ENCODE measurements at regions of chr4 and their contacts with region 1.

Region 1: GRCh38 chr4:108492816-108493595 is 127.4 kb upstream of the RPL34 start:
- DNase-seq: peak; percentile 11
- ATAC-seq: peak; percentile 88
- H3K4me3 ChIP-seq: no peak overlapping the region
- H3K27ac ChIP-seq: no peak overlapping the region
- H3K4me1 ChIP-seq: no peaks in the 10 kb centered on the region
- H3K27me3 ChIP-seq: no peaks in the 10 kb centered on the region; the same call in 1 of the 2 replicates
- CTCF ChIP-seq: peak; percentile 51
- POLR2A ChIP-seq: no peak
- RAD21 ChIP-seq: peak; percentile 76

Region 2: DNA sequence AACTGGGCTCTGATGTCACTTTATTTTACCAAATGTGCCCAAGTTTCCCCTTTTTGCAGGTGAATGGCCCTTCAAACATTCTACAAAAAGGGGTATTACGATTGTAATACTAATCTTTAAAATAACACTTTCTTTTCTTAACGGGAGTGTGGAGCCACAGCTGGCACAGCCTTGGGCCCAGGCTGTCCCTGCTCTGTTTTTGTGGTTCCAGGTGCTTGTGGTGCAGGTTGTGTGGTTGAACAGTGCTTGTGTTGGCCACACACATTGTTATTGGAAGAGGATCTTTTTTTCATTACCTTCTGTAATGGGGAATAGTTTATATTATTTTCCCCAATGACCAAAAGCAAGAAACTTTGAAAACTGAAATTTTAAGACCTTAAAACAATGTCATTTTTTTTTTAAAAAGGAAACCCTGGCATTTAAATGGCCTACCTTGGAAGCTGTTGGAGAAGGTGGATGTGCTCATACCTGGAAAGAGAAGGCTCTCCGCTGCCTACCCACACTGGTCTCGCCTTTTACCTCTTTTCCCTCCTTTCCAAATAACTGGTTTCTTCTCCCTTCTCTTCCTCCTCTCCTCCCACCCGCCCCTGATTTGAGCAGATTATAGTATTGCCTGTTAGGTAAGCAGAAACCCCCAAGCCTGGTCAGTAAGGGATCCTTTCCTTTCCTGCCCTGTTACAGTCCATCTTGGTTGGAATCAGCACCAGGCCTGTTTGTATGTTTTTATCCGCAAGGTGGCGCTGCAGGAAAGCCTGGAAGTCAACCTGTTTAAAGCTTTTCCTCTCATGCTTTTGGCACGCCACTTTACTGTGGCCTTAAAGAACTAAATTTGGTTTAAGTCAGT is 474.7 kb before region 1 on chr4:
- CTCF ChIA-PET with region 1: interaction called, 7 read pairs
- POLR2A ChIA-PET with region 1: no interaction called
- dilution Hi-C with region 1: no loop called
- in situ Hi-C with region 1: no loop called
- intact Hi-C with region 1: loop called (anchors 2 kb)
- DNase-seq: peak; percentile 77
- ATAC-seq: peak; percentile 93
- H3K4me3 ChIP-seq: no peak overlapping the region
- H3K27ac ChIP-seq: no peak overlapping the region
- H3K4me1 ChIP-seq: no peaks in the 10 kb centered on the region
- H3K27me3 ChIP-seq: no peaks in the 10 kb centered on the region
- CTCF ChIP-seq: peak; percentile 84
- POLR2A ChIP-seq: no peak
- RAD21 ChIP-seq: peak; percentile 87

Region 3: GRCh38 chr4:108030332-108030731 is 462.7 kb before region 1 on chr4:
- CTCF ChIA-PET with region 1: interaction called, 4 read pairs
- POLR2A ChIA-PET with region 1: no interaction called
- dilution Hi-C with region 1: no loop called
- in situ Hi-C with region 1: no loop called
- intact Hi-C with region 1: loop called (anchors 1 kb)
- DNase-seq: peak; percentile 76
- ATAC-seq: peak; percentile 95
- H3K4me3 ChIP-seq: no peak overlapping the region
- H3K27ac ChIP-seq: no peak overlapping the region
- H3K4me1 ChIP-seq: peaks cover 3% of the 10 kb centered on the region; the same call in 1 of the 2 replicates
- H3K27me3 ChIP-seq: no peaks in the 10 kb centered on the region
- CTCF ChIP-seq: peak; percentile 71
- POLR2A ChIP-seq: no peak
- RAD21 ChIP-seq: peak; percentile 76

Region 4: DNA sequence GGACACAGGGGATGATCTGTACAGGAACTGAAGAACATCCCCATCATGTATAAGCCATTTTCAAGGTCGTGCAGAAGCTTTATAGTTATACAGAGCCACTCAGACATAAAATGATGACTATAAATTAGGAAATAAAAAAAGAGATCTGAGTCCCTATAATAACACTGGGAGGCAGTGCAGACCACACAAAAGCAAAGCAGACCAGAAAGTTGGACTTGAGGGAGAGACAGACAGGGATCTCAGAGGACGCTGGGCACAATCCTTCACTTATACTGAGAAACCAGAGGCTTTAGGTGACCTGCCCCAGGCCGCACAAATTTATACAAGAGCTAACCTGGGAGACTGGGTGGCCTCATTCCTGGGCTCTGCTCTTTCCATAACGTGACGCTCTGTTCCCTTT is 432.8 kb before region 1 on chr4:
- CTCF ChIA-PET with region 1: interaction called, 5 read pairs
- POLR2A ChIA-PET with region 1: no interaction called
- dilution Hi-C with region 1: no loop called
- in situ Hi-C with region 1: no loop called
- intact Hi-C with region 1: loop called (anchors 1 kb)
- DNase-seq: peak; percentile 46
- ATAC-seq: peak; percentile 70
- H3K4me3 ChIP-seq: no peak overlapping the region
- H3K27ac ChIP-seq: no peak overlapping the region
- H3K4me1 ChIP-seq: peaks cover 3% of the 10 kb centered on the region
- H3K27me3 ChIP-seq: no peaks in the 10 kb centered on the region; the same call in 1 of the 2 replicates
- CTCF ChIP-seq: peak; percentile 50
- POLR2A ChIP-seq: no peak
- RAD21 ChIP-seq: peak; percentile 50

Region 5: GRCh38 chr4:108168671-108169523 is 324.1 kb before region 1 on chr4 and contains the start of gene LEF1:
- CTCF ChIA-PET with region 1: no interaction called
- POLR2A ChIA-PET with region 1: no interaction called
- dilution Hi-C with region 1: no loop called
- in situ Hi-C with region 1: no loop called
- intact Hi-C with region 1: loop called (anchors 10 kb)
- DNase-seq: peak; percentile 11
- ATAC-seq: peak; percentile 48
- H3K4me3 ChIP-seq: peak within 1 kb of the TSS; percentile 53
- H3K27ac ChIP-seq: no peak within 1 kb of the TSS
- H3K4me1 ChIP-seq: peaks cover 2% of the 10 kb centered on the region; the same call in 1 of the 2 replicates
- H3K27me3 ChIP-seq: peaks cover 84% of the 10 kb centered on the region
- CTCF ChIP-seq: no peak
- POLR2A ChIP-seq: no peak
- RAD21 ChIP-seq: no peak
- total RNA-seq, gene LEF1: 0.56 and 1.8 TPM in 2 replicates

Region 6: DNA sequence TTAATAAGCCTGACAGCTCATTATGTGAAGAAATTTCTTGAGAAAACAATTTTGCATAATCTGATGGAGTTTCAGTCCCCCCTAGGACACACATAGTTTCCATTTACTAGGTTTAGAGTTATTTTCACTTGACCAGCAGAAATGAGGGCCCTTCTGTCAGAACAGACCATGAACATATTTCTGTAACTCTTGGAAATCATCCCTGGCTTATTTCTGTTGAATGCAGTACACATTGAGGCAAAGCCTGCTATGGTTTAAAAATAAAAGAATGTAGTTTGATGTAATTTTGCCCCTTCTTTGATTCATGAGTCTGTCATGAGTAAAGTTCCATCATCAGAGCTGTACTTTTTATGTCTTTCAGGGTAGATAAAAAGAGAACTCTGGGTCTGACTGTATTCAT is 374.5 kb after region 1 on chr4:
- CTCF ChIA-PET with region 1: no interaction called
- POLR2A ChIA-PET with region 1: no interaction called
- dilution Hi-C with region 1: no loop called
- in situ Hi-C with region 1: no loop called
- intact Hi-C with region 1: no loop called
- DNase-seq: no peak
- ATAC-seq: no peak
- H3K4me3 ChIP-seq: no peak overlapping the region
- H3K27ac ChIP-seq: no peak overlapping the region
- H3K4me1 ChIP-seq: no peaks in the 10 kb centered on the region
- H3K27me3 ChIP-seq: no peaks in the 10 kb centered on the region
- CTCF ChIP-seq: no peak
- POLR2A ChIP-seq: no peak
- RAD21 ChIP-seq: no peak